Sigmoid colon (tissue), 7 donors: ENCODE measurements at regions of chr15 and their contacts with region 1.

Region 1: DNA sequence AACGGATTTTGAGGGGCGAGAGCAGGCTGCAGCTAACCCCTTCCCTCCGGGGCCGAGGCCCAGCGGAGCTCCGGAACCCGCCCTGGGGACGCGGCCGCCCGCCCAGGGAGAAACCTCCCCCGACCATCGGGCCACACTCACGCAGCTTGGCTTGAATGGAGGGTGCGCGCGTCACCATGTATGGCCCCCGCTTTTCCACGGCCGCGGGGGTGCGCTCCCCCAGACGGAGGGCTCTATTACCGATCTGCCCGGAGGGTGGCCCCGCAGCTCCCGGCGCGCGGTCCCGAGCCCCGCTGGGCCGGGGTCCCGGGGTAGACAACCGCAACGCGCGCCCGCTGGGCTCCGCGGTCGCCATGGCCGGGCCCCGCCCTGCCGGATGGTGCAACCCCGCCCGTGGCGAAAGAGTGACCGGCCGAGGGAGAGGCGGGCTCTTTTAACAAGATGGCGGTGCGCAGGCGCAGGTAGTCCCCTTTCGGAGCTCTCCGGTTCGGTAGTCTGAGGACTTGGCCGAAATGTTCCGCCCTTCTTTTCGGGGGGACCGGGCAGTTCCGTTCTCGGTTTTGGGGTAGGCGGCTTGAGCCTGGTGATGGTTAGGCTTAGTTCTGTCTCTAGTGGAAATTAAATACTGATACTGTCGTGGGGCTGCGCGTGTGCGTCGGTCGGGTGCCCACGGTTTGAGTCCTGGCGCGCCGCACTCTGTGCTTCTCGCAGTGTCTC is at the start of gene FAM219B:
- DNase-seq: peak; percentile 98
- H3K4me3 ChIP-seq: peak within 1 kb of the TSS; percentile 77 to 90 (median 86)
- H3K27ac ChIP-seq: peak within 1 kb of the TSS; percentile 91 to 97 (median 96)
- H3K4me1 ChIP-seq: peaks cover 0 to 29% (median 24%) of the 10 kb centered on the region in 4 donors
- H3K27me3 ChIP-seq: no peaks in the 10 kb centered on the region
- CTCF ChIP-seq: no peak
- EP300 ChIP-seq: no peak
- POLR2A ChIP-seq: peak; percentile 51 to 64
- total RNA-seq, gene FAM219B: 50.5 to 65.0 (median 57.2) TPM

Region 2: DNA sequence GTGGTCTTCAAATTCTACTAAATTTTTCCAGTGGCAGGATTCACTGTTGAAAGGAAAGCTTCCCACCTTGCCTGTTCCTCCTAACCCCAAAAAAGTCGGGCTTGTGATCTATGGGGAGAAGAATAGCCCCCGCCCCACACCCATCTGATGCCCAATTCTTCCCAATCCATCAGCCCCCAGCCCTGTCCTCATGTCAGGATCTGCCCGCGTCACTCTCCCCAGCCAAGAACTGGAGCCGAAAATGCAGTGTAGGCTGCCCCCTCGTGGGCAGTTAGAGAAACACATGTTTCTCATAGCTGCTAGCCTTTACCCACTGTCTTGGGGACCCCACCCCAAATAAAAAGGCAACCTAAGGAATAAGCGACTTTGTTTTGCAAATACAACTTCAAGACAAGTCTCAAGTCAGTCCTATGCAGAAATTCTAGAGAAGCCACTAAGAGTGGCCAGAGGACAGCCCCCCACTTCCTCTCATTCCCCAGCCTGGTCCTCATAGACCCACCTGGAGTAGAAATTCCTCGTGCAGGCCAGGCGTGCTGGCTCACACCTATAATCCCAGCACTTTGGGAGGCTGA is 137.7 kb before region 1 on chr15:
- intact Hi-C with region 1: no loop called
- DNase-seq: no peak
- H3K4me3 ChIP-seq: peak overlapping the region in 1 of 4 donors; percentile 5
- H3K27ac ChIP-seq: no peak overlapping the region
- H3K4me1 ChIP-seq: peaks cover 0 to 6% (median 3%) of the 10 kb centered on the region in 4 donors
- H3K27me3 ChIP-seq: peaks cover 0 to 16% (median 0%) of the 10 kb centered on the region in 3 donors
- CTCF ChIP-seq: peak; percentile 71 to 86 (median 86)
- EP300 ChIP-seq: no peak
- POLR2A ChIP-seq: no peak

Region 3: DNA sequence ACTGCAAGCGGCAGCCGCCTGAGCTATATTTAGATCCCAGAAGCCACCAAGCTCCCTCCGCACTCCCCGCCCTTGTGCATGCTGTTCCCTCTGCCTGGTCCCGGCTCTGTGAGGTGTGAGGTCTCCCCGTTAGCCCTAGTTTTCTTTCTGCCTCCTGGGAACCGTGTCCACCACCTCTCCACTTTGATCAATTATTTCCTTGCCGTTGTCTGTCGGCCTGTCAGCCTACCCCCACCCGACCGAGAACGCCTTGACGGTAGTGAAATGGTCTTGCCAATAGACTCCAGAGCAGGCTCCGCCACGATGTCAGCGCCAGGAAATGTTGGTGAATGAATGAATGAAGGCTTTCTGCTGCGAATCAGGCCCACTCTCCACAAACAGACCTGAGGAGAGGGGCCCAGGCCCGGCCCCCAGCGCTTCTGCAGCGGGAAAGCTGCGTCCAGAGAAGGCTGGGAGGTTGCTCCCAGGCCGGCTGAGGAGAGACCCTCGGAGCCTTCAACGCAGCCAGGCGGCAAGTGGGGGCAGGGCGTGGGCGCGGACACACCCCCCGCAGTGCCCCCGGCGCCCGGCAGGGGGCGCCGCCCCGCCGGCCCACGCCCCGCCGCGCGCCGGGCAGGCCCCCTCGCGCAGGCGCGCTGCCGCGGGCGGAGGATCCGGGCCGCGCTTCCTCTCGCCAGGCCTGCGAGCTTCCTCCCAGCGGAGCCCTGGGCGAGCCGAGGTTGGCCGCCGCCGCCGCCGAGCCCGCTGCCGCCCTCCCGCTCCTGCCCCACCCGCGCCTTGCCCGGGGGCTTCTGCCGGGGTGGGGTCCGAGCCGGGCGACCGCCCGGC is 125.0 kb before region 1 on chr15 and contains the start of gene CSK:
- intact Hi-C with region 1: loop called (anchors 5 kb)
- DNase-seq: peak; percentile 86
- H3K4me3 ChIP-seq: peak within 1 kb of the TSS; percentile 48 to 92 (median 78)
- H3K27ac ChIP-seq: peak within 1 kb of the TSS; percentile 77 to 93 (median 82)
- H3K4me1 ChIP-seq: peaks cover 0 to 60% (median 46%) of the 10 kb centered on the region in 4 donors
- H3K27me3 ChIP-seq: no peaks in the 10 kb centered on the region
- CTCF ChIP-seq: peak in 3 of 4 experiments; percentile 14 to 54 (median 26)
- EP300 ChIP-seq: no peak
- POLR2A ChIP-seq: no peak
- total RNA-seq, gene CSK: 9.7 to 22.4 (median 14.2) TPM

Region 4: DNA sequence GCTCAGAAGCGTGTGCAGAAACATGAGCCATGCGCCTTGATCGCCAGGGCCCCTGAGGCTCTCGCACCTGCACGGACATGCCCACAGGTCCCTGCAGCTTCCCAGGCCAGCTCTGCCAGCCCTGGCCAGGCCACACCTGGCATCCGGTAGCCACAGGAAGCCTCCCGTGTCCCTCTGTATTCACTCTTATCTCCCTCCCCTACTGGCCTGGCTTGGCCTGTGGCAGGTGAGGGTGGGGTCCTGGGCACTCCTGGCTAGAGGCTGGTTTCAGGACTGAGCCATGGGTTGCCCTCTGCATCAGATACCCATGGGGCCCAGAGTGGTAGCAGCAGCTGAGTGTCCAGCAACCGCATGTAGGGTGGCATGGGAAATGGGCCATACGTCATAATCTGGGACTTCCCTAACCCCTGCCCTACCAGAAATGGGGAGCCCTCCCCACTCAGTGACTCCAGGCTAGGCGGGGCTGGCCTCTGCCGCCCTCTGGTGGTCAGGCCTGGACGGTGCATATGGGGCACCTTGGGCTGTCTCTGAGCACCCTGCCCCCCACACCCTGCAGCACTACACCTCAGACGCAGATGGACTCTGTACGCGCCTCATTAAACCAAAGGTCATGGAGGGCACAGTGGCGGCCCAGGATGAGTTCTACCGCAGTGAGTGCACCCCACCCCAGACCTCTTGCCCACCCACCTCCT is 106.6 kb before region 1 on chr15:
- intact Hi-C with region 1: no loop called
- DNase-seq: peak; percentile 80
- H3K4me3 ChIP-seq: no peak overlapping the region
- H3K27ac ChIP-seq: no peak overlapping the region
- H3K4me1 ChIP-seq: peaks cover 0 to 9% (median 5%) of the 10 kb centered on the region in 4 donors
- H3K27me3 ChIP-seq: no peaks in the 10 kb centered on the region
- CTCF ChIP-seq: peak; percentile 87 to 99 (median 93)
- EP300 ChIP-seq: no peak
- POLR2A ChIP-seq: no peak

Region 5: DNA sequence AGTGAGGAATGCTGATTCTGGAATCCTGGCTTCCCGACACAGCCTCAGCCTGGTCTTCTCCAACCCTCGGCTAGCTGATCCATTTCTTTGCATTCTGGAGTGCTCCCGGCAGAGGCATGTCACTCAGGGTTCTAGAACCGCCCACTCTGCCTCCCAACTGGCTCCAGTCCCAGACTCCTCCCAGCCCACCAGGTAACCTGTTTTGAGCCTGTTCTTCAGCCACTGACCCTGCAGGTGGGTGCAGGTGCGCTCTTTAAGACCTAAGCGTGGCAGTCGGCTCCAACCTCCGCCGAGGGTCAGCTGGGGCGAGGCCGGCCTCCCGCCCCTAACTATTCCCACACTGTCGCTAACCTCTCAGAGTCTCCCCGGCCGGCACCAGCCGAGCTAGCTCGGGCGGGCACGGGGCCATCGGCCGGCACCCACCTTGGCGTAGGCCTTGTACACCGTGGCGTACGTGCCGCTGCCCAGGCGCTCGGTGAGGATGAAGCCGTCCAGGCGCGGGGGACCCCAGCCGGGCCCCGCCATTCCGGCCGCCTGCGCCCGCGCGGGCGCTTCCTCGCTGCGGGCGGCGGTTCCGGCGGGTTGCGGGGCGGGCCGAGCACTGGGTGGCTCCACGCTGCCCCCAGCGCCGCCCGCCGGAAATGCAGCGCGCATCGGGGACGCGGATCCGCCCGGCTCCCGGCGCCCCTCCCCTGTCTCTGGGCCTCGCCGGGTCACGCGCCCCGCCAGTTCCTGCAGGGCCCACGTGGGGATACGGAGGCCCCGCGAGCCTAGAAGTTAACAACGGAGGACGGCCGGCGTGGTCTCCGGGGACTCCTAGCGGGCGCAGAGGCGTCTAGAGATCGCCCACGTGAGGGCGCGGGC is 63.8 kb before region 1 on chr15 and contains the start of gene ULK3:
- intact Hi-C with region 1: loop called (anchors 2 kb)
- DNase-seq: peak; percentile 96
- H3K4me3 ChIP-seq: peak within 1 kb of the TSS; percentile 61 to 92 (median 78)
- H3K27ac ChIP-seq: peak within 1 kb of the TSS; percentile 83 to 88 (median 85)
- H3K4me1 ChIP-seq: peaks cover 0 to 32% (median 23%) of the 10 kb centered on the region in 4 donors
- H3K27me3 ChIP-seq: no peaks in the 10 kb centered on the region
- CTCF ChIP-seq: peak; percentile 35 to 78 (median 54)
- EP300 ChIP-seq: peak in 1 of 4 donors; percentile 40
- POLR2A ChIP-seq: peak in 1 of 2 donors; percentile 17
- total RNA-seq, gene ULK3: 21.1 to 46.8 (median 30.6) TPM

Region 6: DNA sequence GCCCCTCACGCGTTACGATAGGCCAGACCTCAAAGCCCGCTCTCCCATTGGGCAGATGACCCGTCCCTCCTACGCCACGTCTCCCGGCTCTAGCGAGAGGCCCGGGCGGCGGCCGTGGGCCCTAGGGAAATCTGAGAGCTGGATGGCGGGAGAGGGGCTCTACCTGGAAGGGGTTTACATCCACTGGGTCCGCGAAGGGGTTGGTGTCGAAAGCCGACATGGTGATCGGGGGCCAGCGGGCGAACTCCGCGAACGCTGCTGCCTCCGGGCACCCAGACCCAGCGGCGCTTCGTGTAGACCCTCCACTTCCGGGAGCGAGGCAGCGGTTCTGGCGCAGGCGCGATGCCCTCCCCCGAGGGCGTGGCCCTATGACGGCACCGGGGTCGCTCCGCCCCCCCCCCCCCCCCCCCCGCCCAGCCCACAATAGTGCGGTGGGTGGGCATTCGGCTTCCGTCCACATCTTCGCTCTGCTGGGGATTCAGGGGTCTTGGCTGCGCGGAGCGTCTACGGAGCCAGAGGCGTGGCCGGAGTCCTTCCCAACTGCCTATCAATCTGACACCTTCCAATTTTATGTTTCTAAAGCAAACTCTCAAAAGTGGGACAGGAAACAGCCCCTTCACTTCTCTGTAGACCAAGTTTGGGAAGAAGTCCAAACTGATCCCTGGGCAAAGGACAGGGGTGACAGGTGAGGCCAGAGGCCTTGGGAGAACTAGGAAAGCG is 33.4 kb before region 1 on chr15 and contains the start of gene SCAMP2:
- intact Hi-C with region 1: loop called (anchors 5 kb)
- DNase-seq: peak; percentile 98
- H3K4me3 ChIP-seq: peak within 1 kb of the TSS; percentile 57 to 74 (median 64)
- H3K27ac ChIP-seq: peak within 1 kb of the TSS; percentile 85 to 94 (median 88)
- H3K4me1 ChIP-seq: peaks cover 0 to 52% (median 44%) of the 10 kb centered on the region in 4 donors
- H3K27me3 ChIP-seq: no peaks in the 10 kb centered on the region
- CTCF ChIP-seq: no peak
- EP300 ChIP-seq: no peak
- POLR2A ChIP-seq: peak; percentile 48 to 82
- total RNA-seq, gene SCAMP2: 27.8 to 37.8 (median 36.2) TPM

Region 7: DNA sequence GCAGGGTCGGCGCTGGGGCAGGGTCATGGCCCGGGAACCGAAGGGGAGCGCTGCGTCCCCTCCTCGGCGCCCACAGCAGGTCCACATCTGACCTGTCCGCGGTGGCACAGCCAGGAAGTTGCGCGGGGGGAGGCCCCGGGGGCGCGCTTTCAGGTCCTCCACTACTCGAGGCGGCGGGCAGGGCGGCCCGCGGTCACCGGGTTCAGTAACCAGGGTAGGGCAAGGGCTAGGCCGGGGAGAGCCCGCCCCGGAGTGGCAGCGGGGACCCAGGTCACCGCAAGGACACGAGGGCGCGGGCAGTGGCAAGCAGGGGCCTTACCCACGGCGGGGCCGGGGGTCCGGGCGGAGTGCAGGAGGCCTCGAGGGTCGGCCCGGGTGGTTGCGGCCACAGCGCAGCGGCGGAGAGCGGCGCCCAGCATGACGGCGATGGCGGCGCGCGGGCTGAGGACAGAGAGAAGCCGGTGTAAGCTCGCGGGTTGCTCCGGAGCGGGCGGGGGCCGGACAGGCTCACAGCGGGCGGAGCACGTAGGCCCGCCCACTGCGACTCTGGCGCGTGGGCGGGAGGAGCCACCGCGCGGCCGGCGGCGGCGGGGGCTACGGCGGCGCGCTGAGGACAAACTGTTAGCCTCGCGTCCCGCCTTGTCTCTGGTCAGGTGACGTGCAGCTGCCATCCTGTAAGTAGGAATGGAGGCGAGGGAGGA is 31.1 kb after region 1 on chr15 and contains the start of gene COX5A:
- intact Hi-C with region 1: loop called (anchors 1 kb)
- DNase-seq: peak; percentile 97
- H3K4me3 ChIP-seq: peak within 1 kb of the TSS; percentile 84 to 95 (median 92)
- H3K27ac ChIP-seq: peak within 1 kb of the TSS; percentile 91 to 97 (median 96)
- H3K4me1 ChIP-seq: peaks cover 2 to 39% (median 28%) of the 10 kb centered on the region in 4 donors
- H3K27me3 ChIP-seq: no peaks in the 10 kb centered on the region
- CTCF ChIP-seq: no peak
- EP300 ChIP-seq: peak in 1 of 4 donors; percentile 9
- POLR2A ChIP-seq: peak in 1 of 2 donors; percentile 42
- total RNA-seq, gene COX5A: 73.7 to 124 (median 81.6) TPM

Region 8: GRCh38 chr15:74950078-74951000 is 43.7 kb after region 1 on chr15:
- intact Hi-C with region 1: loop called (anchors 5 kb)
- DNase-seq: peak; percentile 85
- H3K4me3 ChIP-seq: no peak overlapping the region
- H3K27ac ChIP-seq: no peak overlapping the region
- H3K4me1 ChIP-seq: peaks cover 0 to 11% (median 3%) of the 10 kb centered on the region in 4 donors
- H3K27me3 ChIP-seq: peaks cover 0 to 23% (median 0%) of the 10 kb centered on the region in 3 donors
- CTCF ChIP-seq: peak; percentile 99 to 100 (median 99)
- EP300 ChIP-seq: no peak
- POLR2A ChIP-seq: no peak